ENCODE measurements at regions of chr12 and their contacts with region 1.

Region 1: GRCh38 chr12:54201001-54201794 is 12.4 kb upstream of the SMUG1 start:
- DNase-seq: peak; percentile 75
- H3K4me3 Mint-ChIP-seq: no peak overlapping the region
- H3K27ac Mint-ChIP-seq: no peak overlapping the region
- H3K4me1 Mint-ChIP-seq: no peaks in the 10 kb centered on the region
- H3K27me3 Mint-ChIP-seq: peaks cover 40% of the 10 kb centered on the region

Region 2: DNA sequence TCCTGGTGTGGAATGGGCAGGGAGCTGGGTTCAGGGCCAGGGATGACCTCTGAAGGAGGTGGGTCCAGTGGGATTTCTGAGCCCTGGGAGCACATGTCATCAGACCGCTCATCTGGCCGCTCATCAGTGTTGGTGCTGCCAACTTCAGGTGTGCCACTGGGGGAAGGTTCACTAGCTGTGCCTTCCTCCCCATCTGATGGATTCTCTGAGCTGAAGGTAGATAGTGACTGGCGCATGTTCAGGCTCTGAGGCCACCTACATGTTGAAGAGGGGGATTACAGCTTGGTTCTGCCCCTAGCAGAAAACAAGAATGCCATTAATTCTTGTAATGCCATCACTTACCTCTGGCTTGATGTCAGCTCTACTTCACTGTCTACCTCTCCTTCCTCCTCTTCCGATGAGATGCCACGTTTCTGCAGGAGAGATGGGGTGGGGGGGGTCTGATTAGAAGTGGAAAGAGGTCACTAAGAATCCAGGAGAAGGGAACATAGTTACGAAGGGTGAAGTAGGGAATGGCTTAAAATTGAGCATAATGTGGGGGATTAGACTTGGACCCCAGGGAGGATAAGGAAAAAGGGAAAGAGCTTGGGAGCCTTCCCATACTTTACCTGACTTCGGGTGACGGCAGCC is 719.1 kb before region 1 on chr12:
- CTCF ChIA-PET with region 1: no interaction called
- intact Hi-C with region 1: no loop called
- DNase-seq: no peak
- H3K4me3 Mint-ChIP-seq: no peak overlapping the region
- H3K27ac Mint-ChIP-seq: peak overlapping the region; percentile 54
- H3K4me1 Mint-ChIP-seq: peaks cover 4% of the 10 kb centered on the region
- H3K27me3 Mint-ChIP-seq: no peaks in the 10 kb centered on the region

Region 3: GRCh38 chr12:53995378-53996239 is 205.6 kb before region 1 on chr12:
- CTCF ChIA-PET with region 1: interaction called, 10 read pairs
- intact Hi-C with region 1: no loop called
- DNase-seq: peak; percentile 36
- H3K4me3 Mint-ChIP-seq: peak overlapping the region; percentile 74
- H3K27ac Mint-ChIP-seq: no peak overlapping the region
- H3K4me1 Mint-ChIP-seq: peaks cover 36% of the 10 kb centered on the region
- H3K27me3 Mint-ChIP-seq: peaks cover 79% of the 10 kb centered on the region

Region 4: DNA sequence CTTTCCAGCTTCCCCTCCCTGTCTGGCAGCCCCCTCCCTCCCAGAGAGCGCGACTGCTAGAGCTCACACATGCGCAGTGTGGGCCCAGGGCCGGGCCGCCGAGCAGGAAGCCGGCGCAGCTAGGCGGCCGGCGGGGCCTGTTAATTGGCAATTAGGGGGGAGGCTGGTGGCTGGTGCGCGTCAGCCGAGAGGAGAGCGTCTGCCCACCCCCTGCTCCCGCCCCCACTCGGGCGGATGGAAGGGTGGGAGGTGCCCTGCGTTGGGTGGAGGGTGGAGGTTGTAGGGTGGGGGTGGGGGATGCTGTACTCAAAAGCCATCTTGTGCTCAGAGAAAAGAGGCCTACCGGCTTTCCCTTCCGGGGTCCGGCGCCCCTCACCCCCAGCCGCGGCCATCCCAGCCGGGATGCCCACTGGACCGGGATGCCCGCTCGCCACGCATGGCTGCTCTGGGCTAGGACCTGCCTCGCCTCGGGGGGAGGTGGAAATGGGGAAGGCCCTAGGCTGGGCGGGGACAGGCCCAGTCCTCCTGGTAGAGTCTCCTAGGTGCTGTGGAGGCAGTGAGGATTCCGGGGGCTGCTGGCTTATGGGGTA is 183.2 kb before region 1 on chr12:
- CTCF ChIA-PET with region 1: interaction called, 10 read pairs
- intact Hi-C with region 1: no loop called
- DNase-seq: peak; percentile 79
- H3K4me3 Mint-ChIP-seq: peak overlapping the region; percentile 76
- H3K27ac Mint-ChIP-seq: no peak overlapping the region
- H3K4me1 Mint-ChIP-seq: peaks cover 26% of the 10 kb centered on the region
- H3K27me3 Mint-ChIP-seq: peaks cover 78% of the 10 kb centered on the region

Region 5: GRCh38 chr12:54135621-54136350 is 65.4 kb before region 1 on chr12:
- CTCF ChIA-PET with region 1: interaction called, 11 read pairs
- intact Hi-C with region 1: no loop called
- DNase-seq: no peak
- H3K4me3 Mint-ChIP-seq: no peak overlapping the region
- H3K27ac Mint-ChIP-seq: no peak overlapping the region
- H3K4me1 Mint-ChIP-seq: no peaks in the 10 kb centered on the region
- H3K27me3 Mint-ChIP-seq: peaks cover 28% of the 10 kb centered on the region